CD8-positive, alpha-beta T cell (primary cell): ENCODE measurements at regions of chr2 and their contacts with region 1.

Region 1: DNA sequence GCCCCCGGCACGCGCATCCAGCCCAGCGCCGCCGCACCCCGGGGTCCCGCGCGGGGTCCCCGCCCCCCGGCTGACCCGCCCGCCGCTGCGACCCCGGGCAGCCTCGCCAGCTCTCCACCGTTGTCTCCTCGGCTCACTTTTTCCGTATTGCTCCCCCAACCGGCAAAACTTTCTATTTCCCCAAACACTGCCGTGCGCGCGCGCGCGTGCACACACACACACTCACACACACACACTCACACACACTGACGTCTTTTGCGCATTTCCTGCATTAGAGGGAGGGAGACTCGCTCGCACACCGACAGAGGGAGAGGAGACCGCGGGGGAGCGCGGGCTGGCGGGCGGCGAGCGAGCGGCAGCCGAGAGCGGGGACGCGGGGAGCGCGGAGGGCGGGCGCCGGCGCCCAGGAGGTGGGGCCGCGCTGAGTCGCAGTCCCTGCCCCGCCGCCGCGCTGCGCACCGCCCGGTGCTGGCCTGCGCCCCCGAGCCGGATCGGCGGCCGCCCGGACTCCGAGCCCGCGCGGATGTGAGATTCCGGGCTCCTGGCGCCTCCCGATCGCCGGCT is 542 bp upstream of the PRKCE start:
- DNase-seq: peak; percentile 92 to 99 (median 95)
- ATAC-seq: peak; percentile 88
- H3K4me3 ChIP-seq: peak overlapping the region; percentile 83 to 93
- H3K4me3 Mint-ChIP-seq: peak overlapping the region; percentile 96
- H3K27ac ChIP-seq: peak overlapping the region; percentile 74 to 76
- H3K27ac Mint-ChIP-seq: peak overlapping the region; percentile 96
- H3K4me1 ChIP-seq: peaks cover 15% of the 10 kb centered on the region
- H3K4me1 Mint-ChIP-seq: peaks cover 36% of the 10 kb centered on the region
- H3K27me3 ChIP-seq: no peaks in the 10 kb centered on the region
- H3K27me3 Mint-ChIP-seq: no peaks in the 10 kb centered on the region
- CTCF ChIP-seq: peak; percentile 48

Region 2: DNA sequence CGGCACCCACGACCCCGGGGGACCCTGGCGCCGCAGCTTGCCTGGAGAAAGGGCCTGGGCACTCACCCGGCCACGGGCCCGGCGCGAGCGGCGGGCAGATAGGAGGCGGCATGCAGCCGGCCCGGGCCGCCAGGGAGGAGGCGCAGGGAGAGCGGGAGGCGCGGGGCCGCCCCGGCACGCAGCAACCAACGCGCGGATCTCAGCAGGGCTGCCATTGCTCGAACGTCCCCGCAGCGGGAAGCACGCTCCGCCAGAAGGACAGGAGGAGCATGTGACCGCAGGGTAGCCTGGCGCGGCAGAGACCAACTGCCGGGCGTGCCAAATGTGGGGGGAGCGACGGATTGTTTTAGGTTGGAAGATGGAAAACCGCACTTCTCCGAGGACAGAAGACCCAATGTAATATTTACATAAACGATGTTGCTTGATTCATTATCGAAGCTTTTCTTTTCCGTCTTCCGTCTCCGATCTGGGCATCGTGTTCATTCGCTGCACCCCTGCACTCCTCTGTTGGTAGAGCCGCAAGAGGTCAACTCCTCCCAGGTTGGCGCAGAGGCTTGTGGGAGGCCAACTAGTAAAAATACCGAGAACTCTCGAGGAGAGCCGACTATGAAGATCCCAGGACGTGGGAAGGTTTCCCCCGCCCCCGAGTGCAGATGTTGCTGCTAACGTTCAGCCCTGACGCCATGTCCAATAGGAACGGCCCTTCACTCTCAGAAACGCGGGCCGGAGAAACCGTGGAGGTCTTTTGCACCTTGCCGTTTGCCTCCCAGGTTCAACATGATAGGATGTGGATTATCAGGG is 1655.0 kb before region 1 on chr2 and contains the start of gene LRPPRC:
- CTCF ChIA-PET with region 1: no interaction called
- POLR2A ChIA-PET with region 1: no interaction called
- intact Hi-C with region 1: loop called (anchors 2 to 10 kb)
- DNase-seq: peak; percentile 77 to 96 (median 90)
- ATAC-seq: peak; percentile 96
- H3K4me3 ChIP-seq: peak within 1 kb of the TSS; percentile 78 to 94
- H3K4me3 Mint-ChIP-seq: peak within 1 kb of the TSS; percentile 91
- H3K27ac ChIP-seq: peak within 1 kb of the TSS; percentile 65 to 91
- H3K27ac Mint-ChIP-seq: peak within 1 kb of the TSS; percentile 96
- H3K4me1 ChIP-seq: peaks cover 36% of the 10 kb centered on the region
- H3K4me1 Mint-ChIP-seq: peaks cover 51% of the 10 kb centered on the region
- H3K27me3 ChIP-seq: no peaks in the 10 kb centered on the region
- H3K27me3 Mint-ChIP-seq: peaks cover 2% of the 10 kb centered on the region
- CTCF ChIP-seq: no peak
- total RNA-seq, gene LRPPRC: 62.8 to 67.2 TPM

Region 3: DNA sequence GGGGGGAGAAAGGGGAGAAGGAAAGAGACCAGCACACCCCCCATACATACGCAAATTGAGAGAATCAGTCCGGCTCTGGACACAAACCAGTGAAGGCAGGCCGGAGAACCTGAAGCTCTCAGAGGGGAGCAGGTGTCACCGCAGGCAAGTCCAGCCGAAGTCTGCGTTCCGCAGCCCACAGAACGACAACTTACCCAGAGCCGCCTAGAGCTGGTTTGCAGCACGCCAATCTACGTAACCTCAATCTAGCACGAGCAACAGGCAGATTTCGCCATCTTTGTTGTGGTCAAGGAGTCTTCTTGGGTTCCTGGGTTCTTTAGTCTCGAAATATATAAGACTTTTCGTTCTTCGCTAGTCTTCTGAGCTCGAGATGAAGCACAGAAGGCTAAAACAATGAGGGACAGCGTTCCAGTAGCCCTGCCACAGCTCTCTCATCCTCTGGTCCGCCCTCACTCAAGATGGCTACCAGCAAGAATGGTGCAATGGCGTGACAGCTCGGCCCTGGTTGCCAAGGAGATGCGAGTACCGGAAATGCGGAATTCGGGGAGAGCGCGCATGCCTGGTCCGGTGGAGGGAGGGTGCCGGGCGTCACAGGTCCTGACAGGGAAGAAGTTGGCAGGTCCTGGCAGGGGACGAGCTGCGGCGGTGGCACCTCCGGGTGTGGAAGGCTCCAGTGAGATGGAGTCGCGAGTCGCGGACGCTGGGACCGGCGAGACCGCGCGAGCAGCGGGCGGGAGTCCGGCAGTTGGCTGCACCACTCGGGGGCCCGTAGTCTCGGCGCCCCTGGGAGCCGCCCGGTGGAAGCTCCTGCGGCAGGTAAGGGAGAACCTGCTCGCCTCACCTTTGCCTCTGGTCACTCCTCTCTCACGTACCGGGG is 1289.4 kb before region 1 on chr2 and contains the starts of genes CAMKMT and PREPL:
- CTCF ChIA-PET with region 1: no interaction called
- POLR2A ChIA-PET with region 1: no interaction called
- intact Hi-C with region 1: loop called in 1 of 2 experiments (anchors 5 kb)
- DNase-seq: peak; percentile 97 to 99 (median 98)
- ATAC-seq: peak; percentile 88
- H3K4me3 ChIP-seq: peak within 1 kb of the TSS; percentile 74 to 81
- H3K4me3 Mint-ChIP-seq: peak within 1 kb of the TSS; percentile 98
- H3K27ac ChIP-seq: peak within 1 kb of the TSS; percentile 93 to 98
- H3K27ac Mint-ChIP-seq: peak within 1 kb of the TSS; percentile 100
- H3K4me1 ChIP-seq: peaks cover 24% of the 10 kb centered on the region
- H3K4me1 Mint-ChIP-seq: peaks cover 61% of the 10 kb centered on the region
- H3K27me3 ChIP-seq: no peaks in the 10 kb centered on the region
- H3K27me3 Mint-ChIP-seq: no peaks in the 10 kb centered on the region
- CTCF ChIP-seq: no peak
- total RNA-seq, gene CAMKMT: 12.4 to 13.0 TPM
- total RNA-seq, gene PREPL: 26.6 to 27.9 TPM

Region 4: GRCh38 chr2:45611020-45611737 is 39.8 kb before region 1 on chr2 and contains the start of gene SRBD1:
- CTCF ChIA-PET with region 1: interaction called, 3 read pairs
- POLR2A ChIA-PET with region 1: no interaction called
- intact Hi-C with region 1: loop called (anchors 1 to 2 kb)
- DNase-seq: peak; percentile 61 to 95 (median 85)
- ATAC-seq: peak; percentile 82
- H3K4me3 ChIP-seq: peak within 1 kb of the TSS; percentile 61 to 86
- H3K4me3 Mint-ChIP-seq: peak within 1 kb of the TSS; percentile 97
- H3K27ac ChIP-seq: peak within 1 kb of the TSS; percentile 82 to 94
- H3K27ac Mint-ChIP-seq: peak within 1 kb of the TSS; percentile 97
- H3K4me1 ChIP-seq: peaks cover 11% of the 10 kb centered on the region
- H3K4me1 Mint-ChIP-seq: peaks cover 32% of the 10 kb centered on the region
- H3K27me3 ChIP-seq: no peaks in the 10 kb centered on the region
- H3K27me3 Mint-ChIP-seq: no peaks in the 10 kb centered on the region
- CTCF ChIP-seq: no peak
- total RNA-seq, gene SRBD1: 11.1 to 11.6 TPM

Region 5: DNA sequence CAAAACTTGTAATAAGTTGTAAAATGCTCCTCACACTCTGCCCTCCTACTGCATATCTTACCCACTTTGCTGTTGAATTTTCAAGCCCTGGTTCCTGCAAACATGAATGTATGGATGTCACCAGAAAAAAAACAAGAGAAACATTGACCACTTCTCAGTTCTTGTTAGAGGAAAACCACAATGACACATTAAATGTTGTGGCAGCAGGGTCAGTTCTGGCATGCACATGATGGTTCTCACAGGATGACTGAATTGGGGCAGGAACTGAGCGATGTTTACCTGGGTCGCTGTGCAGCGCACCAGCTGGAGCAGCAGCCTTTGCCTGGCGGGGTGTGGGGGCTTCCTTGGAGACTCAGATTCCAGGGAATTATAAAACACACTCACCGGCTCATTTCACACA is 13.5 kb before region 1 on chr2:
- CTCF ChIA-PET with region 1: no interaction called
- POLR2A ChIA-PET with region 1: no interaction called
- intact Hi-C with region 1: no loop called
- DNase-seq: no peak
- ATAC-seq: no peak
- H3K4me3 ChIP-seq: no peak overlapping the region
- H3K4me3 Mint-ChIP-seq: no peak overlapping the region
- H3K27ac ChIP-seq: no peak overlapping the region
- H3K27ac Mint-ChIP-seq: no peak overlapping the region
- H3K4me1 ChIP-seq: no peaks in the 10 kb centered on the region
- H3K4me1 Mint-ChIP-seq: no peaks in the 10 kb centered on the region
- H3K27me3 ChIP-seq: peaks cover 0 to 3% of the 10 kb centered on the region in 2 experiments
- H3K27me3 Mint-ChIP-seq: peaks cover 30% of the 10 kb centered on the region
- CTCF ChIP-seq: no peak

Region 6: DNA sequence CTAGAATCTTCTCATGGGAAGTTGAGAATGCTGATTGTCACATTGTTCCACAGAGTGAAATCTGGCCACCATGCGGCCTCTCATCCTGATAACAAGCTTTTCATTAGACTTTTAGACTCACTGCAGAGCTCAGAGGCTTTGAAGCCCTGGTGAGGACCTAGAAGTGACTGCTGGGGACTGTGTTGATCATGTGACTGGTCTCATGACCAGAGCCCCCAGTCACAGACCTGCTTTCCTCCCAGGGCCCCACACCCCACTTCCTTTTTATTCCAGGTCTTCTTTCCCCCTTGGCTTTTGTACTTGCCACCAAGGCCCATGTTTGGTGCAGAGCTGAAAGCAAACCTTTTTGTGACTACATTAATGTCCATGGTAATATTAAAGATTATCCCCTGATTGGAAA is 45.8 kb after region 1 on chr2:
- CTCF ChIA-PET with region 1: no interaction called
- POLR2A ChIA-PET with region 1: no interaction called
- intact Hi-C with region 1: no loop called
- DNase-seq: no peak
- ATAC-seq: no peak
- H3K4me3 ChIP-seq: no peak overlapping the region
- H3K4me3 Mint-ChIP-seq: no peak overlapping the region
- H3K27ac ChIP-seq: no peak overlapping the region
- H3K27ac Mint-ChIP-seq: no peak overlapping the region
- H3K4me1 ChIP-seq: no peaks in the 10 kb centered on the region
- H3K4me1 Mint-ChIP-seq: peaks cover 9% of the 10 kb centered on the region
- H3K27me3 ChIP-seq: no peaks in the 10 kb centered on the region
- H3K27me3 Mint-ChIP-seq: no peaks in the 10 kb centered on the region
- CTCF ChIP-seq: no peak

Region 7: GRCh38 chr2:45860136-45861121 is 209.5 kb after region 1 on chr2:
- CTCF ChIA-PET with region 1: no interaction called
- POLR2A ChIA-PET with region 1: no interaction called
- intact Hi-C with region 1: loop called in 1 of 2 experiments (anchors 1 kb)
- DNase-seq: peak in 5 of 9 experiments; percentile 11 to 64 (median 23)
- ATAC-seq: peak; percentile 64
- H3K4me3 ChIP-seq: peak overlapping the region; percentile 39 to 43
- H3K4me3 Mint-ChIP-seq: peak overlapping the region; percentile 89
- H3K27ac ChIP-seq: peak overlapping the region; percentile 1 to 35
- H3K27ac Mint-ChIP-seq: peak overlapping the region; percentile 78
- H3K4me1 ChIP-seq: peaks cover 31% of the 10 kb centered on the region
- H3K4me1 Mint-ChIP-seq: peaks cover 41% of the 10 kb centered on the region
- H3K27me3 ChIP-seq: no peaks in the 10 kb centered on the region
- H3K27me3 Mint-ChIP-seq: no peaks in the 10 kb centered on the region
- CTCF ChIP-seq: no peak

Region 8: GRCh38 chr2:46915811-46916630 is 1265.1 kb after region 1 on chr2:
- CTCF ChIA-PET with region 1: no interaction called
- POLR2A ChIA-PET with region 1: no interaction called
- intact Hi-C with region 1: loop called in 1 of 2 experiments (anchors 5 kb)
- DNase-seq: peak; percentile 60 to 92 (median 81)
- ATAC-seq: peak; percentile 80
- H3K4me3 ChIP-seq: peak overlapping the region; percentile 87 to 99
- H3K4me3 Mint-ChIP-seq: peak overlapping the region; percentile 89
- H3K27ac ChIP-seq: peak overlapping the region; percentile 86 to 91
- H3K27ac Mint-ChIP-seq: peak overlapping the region; percentile 85
- H3K4me1 ChIP-seq: peaks cover 39% of the 10 kb centered on the region
- H3K4me1 Mint-ChIP-seq: peaks cover 53% of the 10 kb centered on the region
- H3K27me3 ChIP-seq: no peaks in the 10 kb centered on the region
- H3K27me3 Mint-ChIP-seq: no peaks in the 10 kb centered on the region
- CTCF ChIP-seq: no peak